ENCODE measurements at regions of chr2 and their contacts with region 1.

Region 1: DNA sequence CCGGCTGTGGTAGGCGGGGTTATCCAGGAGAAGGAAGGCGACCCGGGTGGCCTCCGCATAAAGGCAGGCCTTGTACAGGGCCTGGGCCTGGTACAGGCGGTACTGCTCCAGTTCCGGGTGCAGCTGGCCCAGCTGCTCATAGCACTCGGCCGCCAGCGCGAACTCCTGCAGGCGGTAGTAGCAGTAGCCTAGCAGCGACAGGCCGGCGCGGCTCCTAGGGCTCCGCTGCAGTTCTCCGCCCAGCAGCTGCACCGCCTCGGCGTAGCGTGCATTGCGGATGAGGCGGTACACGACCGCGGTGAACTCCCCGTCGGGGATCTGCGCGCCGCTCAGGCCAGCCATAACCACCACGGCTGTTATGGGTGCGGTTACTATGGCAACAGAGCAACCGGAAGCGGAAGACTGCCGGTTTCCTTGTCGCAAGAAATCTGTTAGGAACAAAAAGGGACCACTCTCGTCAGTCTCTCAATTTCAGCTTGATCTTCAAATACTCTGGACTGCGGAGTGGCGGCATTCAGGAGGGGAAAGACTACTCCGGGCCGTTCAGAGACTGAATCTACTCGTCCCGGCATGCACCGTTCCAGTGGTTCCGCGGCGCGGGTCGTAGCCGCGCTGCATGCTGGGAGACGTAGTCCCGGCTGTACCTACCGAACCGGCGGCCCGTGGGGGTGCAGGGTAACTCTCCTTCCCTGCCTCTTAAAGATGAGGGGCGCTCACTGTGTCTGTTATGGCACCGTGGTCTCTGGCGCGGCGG is 160.0 kb downstream of the AGPS start:
- DNase-seq: peak; percentile 83 to 97 (median 91)
- ATAC-seq: peak; percentile 89
- H3K4me3 ChIP-seq: peak overlapping the region; percentile 85 to 99
- H3K4me3 Mint-ChIP-seq: peak overlapping the region; percentile 96
- H3K27ac ChIP-seq: peak overlapping the region; percentile 98 to 100
- H3K27ac Mint-ChIP-seq: peak overlapping the region; percentile 99
- H3K4me1 ChIP-seq: peaks cover 6% of the 10 kb centered on the region
- H3K4me1 Mint-ChIP-seq: peaks cover 12% of the 10 kb centered on the region
- H3K27me3 ChIP-seq: peaks cover 0 to 2% of the 10 kb centered on the region in 2 experiments
- H3K27me3 Mint-ChIP-seq: no peaks in the 10 kb centered on the region
- CTCF ChIP-seq: no peak

Region 2: DNA sequence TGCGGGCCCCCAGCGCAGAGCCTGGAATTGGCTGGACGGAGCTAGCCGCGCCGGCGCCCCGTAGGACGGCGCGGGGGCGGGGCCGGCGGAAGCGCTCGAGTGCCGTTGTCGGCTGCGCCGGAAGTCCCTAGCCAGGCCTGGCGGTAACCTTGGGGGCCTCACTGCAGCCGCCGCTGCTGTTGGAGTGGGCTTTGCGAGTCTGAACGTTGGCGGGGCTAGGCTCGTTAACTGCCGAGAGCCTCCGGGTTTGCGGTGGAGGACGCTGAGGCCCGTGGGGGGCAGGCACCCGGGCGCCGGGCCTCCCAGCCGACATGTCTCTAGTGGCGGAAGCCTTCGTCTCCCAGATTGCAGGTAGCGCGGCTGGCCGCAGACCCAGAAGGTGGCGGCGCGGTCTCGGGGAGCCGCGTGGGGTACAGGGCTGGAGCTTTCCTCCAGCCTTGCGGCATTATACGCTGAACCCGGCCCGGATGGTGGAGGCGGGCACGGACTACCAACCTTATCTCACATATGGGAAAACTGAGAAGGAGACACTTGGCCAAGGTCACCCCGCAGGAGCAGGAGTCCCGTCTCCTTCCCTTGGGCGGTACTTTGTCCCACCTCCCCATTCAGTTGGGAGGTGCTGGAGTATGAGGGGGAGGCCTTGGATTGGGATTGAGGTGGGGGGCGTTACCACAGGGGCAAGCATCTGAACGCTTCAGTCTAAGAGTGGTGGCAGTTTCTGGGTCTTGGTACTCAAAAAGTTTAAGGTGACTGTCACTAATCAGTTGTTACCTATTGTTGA is 1283.1 kb before region 1 on chr2 and contains the start of gene MTX2:
- CTCF ChIA-PET with region 1: no interaction called
- POLR2A ChIA-PET with region 1: no interaction called
- intact Hi-C with region 1: loop called in 1 of 2 experiments (anchors 2 kb)
- DNase-seq: peak; percentile 44 to 83 (median 69)
- ATAC-seq: peak; percentile 86
- H3K4me3 ChIP-seq: peak within 1 kb of the TSS; percentile 86 to 93
- H3K4me3 Mint-ChIP-seq: peak within 1 kb of the TSS; percentile 95
- H3K27ac ChIP-seq: peak within 1 kb of the TSS; percentile 67 to 76
- H3K27ac Mint-ChIP-seq: peak within 1 kb of the TSS; percentile 93
- H3K4me1 ChIP-seq: peaks cover 10% of the 10 kb centered on the region
- H3K4me1 Mint-ChIP-seq: peaks cover 40% of the 10 kb centered on the region
- H3K27me3 ChIP-seq: no peaks in the 10 kb centered on the region
- H3K27me3 Mint-ChIP-seq: peaks cover under 1% of the 10 kb centered on the region
- CTCF ChIP-seq: no peak
- total RNA-seq, gene MTX2: 4.5 to 6.8 TPM

Region 3: GRCh38 chr2:177392373-177393202 is 160.0 kb before region 1 on chr2 and contains the start of gene AGPS:
- CTCF ChIA-PET with region 1: no interaction called
- POLR2A ChIA-PET with region 1: no interaction called
- intact Hi-C with region 1: loop called in 1 of 2 experiments (anchors 2 kb)
- DNase-seq: peak; percentile 50 to 86 (median 70)
- ATAC-seq: peak; percentile 87
- H3K4me3 ChIP-seq: peak within 1 kb of the TSS; percentile 79 to 86
- H3K4me3 Mint-ChIP-seq: peak within 1 kb of the TSS; percentile 86
- H3K27ac ChIP-seq: peak within 1 kb of the TSS; percentile 55 to 62
- H3K27ac Mint-ChIP-seq: peak within 1 kb of the TSS; percentile 93
- H3K4me1 ChIP-seq: peaks cover 35% of the 10 kb centered on the region
- H3K4me1 Mint-ChIP-seq: peaks cover 59% of the 10 kb centered on the region
- H3K27me3 ChIP-seq: no peaks in the 10 kb centered on the region
- H3K27me3 Mint-ChIP-seq: no peaks in the 10 kb centered on the region
- CTCF ChIP-seq: no peak
- total RNA-seq, gene AGPS: 19.2 to 23.8 TPM

Region 4: DNA sequence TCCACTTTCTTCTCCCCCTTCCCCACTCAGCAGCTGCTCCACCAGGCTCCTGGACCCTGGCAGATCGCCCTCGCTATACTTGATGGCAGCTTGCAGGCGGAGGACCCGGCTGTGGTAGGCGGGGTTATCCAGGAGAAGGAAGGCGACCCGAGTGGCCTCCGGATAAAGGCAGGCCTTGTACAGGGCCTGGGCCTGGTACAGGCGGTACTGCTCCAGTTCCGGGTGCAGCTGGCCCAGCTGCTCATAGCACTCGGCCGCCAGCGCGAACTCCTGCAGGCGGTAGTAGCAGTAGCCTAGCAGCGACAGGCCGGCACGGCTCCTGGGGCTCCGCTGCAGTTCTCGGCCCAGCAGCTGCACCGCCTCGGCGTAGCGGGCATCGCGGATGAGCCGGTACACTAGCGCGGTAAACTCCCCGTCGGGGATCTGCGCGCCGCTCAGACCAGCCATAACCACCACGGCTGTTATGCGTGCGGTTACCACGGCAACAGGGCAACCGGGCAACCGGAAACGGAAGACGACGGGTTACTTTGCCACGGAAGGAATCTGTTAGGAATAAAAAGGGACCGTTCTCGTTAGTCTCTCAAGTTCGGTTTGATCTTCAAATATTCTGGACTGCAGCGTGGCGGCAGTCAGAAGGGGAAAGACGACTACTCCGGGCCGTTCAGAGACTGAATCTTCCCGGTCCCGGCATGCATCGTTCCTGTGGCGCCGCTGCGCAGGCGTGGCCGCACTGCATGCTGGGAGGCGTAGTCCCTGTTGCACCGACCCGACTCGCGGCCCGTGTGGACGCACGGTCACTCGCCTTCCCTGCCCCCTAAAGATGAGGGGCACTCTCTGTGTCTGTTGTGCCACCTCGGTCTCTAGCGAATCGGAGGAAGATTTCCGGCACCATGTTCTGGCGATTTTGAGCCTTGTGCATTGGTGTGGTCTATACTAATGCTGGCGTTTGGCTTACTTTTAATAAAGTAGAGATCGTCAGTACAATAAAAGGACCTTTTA is 66.0 kb after region 1 on chr2:
- CTCF ChIA-PET with region 1: no interaction called
- POLR2A ChIA-PET with region 1: interaction called, 3 read pairs
- intact Hi-C with region 1: loop called (anchors 1 kb)
- DNase-seq: peak; percentile 80 to 96 (median 91)
- ATAC-seq: peak; percentile 89
- H3K4me3 ChIP-seq: peak overlapping the region; percentile 89 to 93
- H3K4me3 Mint-ChIP-seq: peak overlapping the region; percentile 97
- H3K27ac ChIP-seq: peak overlapping the region; percentile 97 to 99
- H3K27ac Mint-ChIP-seq: peak overlapping the region; percentile 98
- H3K4me1 ChIP-seq: peaks cover 8% of the 10 kb centered on the region
- H3K4me1 Mint-ChIP-seq: peaks cover 7% of the 10 kb centered on the region
- H3K27me3 ChIP-seq: no peaks in the 10 kb centered on the region
- H3K27me3 Mint-ChIP-seq: no peaks in the 10 kb centered on the region
- CTCF ChIP-seq: no peak

Measured in CD8-positive, alpha-beta T cell (primary cell).